ENCODE measurements at regions of chr16 and their contacts with region 1.

Region 1: DNA sequence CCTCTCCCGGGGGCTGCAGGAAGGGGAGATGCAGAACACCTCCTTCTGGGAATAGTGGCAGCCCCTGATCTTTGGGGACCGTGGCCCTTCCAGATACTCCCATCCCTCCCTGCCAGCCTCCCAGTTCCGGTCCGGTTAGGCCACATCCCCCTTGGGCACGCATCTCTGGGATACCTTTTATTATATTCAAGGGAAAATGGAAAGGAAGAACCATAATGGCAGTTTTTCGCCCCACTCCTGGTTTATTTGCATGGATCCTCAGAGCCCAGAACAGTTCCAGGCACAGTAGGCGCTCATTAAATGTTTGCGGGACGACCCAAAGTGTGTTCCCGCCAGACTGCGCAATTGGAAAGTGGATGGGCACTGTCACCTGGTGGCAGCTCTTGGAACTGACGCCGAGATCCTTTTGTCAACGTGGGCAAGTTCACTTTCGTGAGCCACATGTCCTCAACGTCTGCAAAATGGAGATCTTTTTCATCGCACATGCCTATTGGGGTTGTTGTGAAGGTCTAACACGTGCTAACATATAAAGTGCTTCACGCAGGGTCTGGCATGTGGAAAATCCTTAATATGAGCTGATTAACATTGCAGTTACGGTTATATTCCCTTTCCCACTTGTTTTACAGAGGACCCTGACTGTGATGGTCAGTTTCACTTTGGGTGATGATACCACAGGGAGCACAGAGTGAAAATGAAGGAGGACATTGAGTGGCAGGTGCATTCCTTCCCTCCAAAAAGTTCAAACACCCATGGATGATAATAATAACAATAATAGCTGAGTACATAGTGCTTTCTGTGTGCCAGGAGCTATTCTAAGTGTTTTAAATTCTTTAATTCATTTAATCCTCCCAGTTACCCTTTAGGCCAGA is 1.7 kb upstream of the GPRC5B start:
- DNase-seq: peak; percentile 12
- H3K4me3 ChIP-seq: peak overlapping the region; percentile 29
- CTCF ChIP-seq: peak; percentile 100

Region 2: GRCh38 chr16:19236561-19237209 is 649.6 kb before region 1 on chr16:
- CTCF ChIA-PET with region 1: no interaction called
- POLR2A ChIA-PET with region 1: no interaction called
- DNase-seq: no peak
- H3K4me3 ChIP-seq: no peak overlapping the region
- CTCF ChIP-seq: no peak

Region 3: DNA sequence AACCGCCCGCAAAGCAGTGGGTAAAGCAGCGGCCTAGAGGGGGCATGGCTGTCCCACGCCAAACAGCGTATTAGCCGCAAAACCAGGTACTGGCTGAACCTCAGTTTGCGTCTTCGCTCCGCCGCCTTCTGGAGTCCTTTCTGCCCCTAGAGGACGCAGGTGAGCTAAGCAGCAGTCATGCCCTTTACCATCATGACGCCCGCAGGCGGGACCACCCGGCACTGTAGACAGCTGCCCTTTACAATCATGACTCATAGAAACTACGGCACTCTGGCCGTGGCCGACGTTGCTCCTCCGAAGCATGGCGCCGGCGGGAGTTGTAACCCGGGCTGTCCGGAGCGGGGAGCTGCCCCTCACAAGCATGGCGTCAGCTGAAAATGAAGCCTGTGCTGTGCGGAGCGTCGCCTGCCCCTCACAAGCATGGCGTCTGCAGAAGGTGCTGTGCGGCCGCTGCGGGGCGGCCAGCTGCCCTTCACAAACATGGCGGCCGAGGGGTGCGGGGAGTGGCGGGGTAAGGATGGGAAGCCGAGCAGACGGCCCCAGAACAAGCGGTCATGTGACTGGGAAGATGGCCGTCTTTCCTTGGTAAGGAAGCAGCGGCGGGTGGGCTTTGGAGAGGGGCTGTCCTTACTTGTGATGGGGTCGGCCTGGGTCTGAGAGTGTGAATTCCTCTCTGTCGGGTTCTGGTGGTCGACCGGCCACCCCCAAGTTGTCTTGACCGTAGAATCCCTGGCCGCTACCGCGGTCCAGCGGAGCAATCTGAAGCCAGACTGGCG is 331.0 kb before region 1 on chr16 and contains the start of gene VPS35L:
- CTCF ChIA-PET with region 1: interaction called, 103 read pairs
- POLR2A ChIA-PET with region 1: no interaction called
- DNase-seq: peak; percentile 90
- H3K4me3 ChIP-seq: peak within 1 kb of the TSS; percentile 91
- CTCF ChIP-seq: peak; percentile 84

Region 4: GRCh38 chr16:19589771-19590302 is 296.5 kb before region 1 on chr16:
- CTCF ChIA-PET with region 1: interaction called, 41 read pairs
- POLR2A ChIA-PET with region 1: no interaction called
- DNase-seq: peak; percentile 63
- H3K4me3 ChIP-seq: no peak overlapping the region
- CTCF ChIP-seq: no peak

Region 5: DNA sequence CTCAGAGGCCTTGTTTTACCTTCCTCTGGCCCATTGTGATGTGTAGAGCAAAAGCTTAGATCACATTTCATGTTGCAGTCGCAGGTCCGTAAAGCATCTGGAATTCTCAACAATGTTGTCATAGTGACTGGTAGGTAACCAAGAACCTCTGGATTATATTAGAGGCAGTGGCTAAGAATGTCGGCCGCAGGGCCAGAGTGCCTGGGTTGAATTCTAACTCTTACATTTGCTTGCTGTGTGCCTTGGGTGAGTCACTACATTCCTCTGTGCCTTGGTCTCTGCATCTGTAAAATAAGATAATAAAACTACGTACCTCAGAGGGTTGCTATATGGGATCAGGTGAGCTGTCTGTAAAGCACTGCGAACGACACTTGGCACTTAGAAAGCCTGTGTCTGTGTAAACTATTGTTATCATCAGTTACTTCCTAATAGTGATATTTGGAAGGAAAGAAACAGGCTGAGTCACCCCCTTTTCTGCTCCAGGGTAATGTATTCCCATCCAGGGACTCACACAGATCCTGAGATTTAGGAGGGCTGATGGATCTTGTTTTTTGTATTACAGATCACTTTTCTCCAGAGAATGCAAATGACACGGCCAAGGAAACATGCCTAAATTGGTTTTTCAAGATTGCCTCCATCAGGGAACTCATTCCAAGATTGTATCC is 278.6 kb before region 1 on chr16:
- CTCF ChIA-PET with region 1: interaction called, 250 read pairs
- POLR2A ChIA-PET with region 1: no interaction called
- DNase-seq: no peak
- H3K4me3 ChIP-seq: no peak overlapping the region
- CTCF ChIP-seq: no peak

Region 6: GRCh38 chr16:19760356-19761060 is 125.8 kb before region 1 on chr16:
- CTCF ChIA-PET with region 1: no interaction called
- POLR2A ChIA-PET with region 1: no interaction called
- DNase-seq: no peak
- H3K4me3 ChIP-seq: no peak overlapping the region
- CTCF ChIP-seq: no peak

Region 7: GRCh38 chr16:19860166-19861041 is 25.9 kb before region 1 on chr16:
- CTCF ChIA-PET with region 1: no interaction called
- POLR2A ChIA-PET with region 1: no interaction called
- DNase-seq: no peak
- H3K4me3 ChIP-seq: no peak overlapping the region
- CTCF ChIP-seq: no peak

Region 8: GRCh38 chr16:19907161-19907992 is 21.1 kb after region 1 on chr16:
- CTCF ChIA-PET with region 1: interaction called, 15 read pairs
- POLR2A ChIA-PET with region 1: no interaction called
- DNase-seq: no peak
- H3K4me3 ChIP-seq: no peak overlapping the region
- CTCF ChIP-seq: peak; percentile 100

Measured in AG04449 (cell line).